OCI-LY7 (cell line): ENCODE measurements at regions of chr1 and their contacts with region 1.

Region 1: DNA sequence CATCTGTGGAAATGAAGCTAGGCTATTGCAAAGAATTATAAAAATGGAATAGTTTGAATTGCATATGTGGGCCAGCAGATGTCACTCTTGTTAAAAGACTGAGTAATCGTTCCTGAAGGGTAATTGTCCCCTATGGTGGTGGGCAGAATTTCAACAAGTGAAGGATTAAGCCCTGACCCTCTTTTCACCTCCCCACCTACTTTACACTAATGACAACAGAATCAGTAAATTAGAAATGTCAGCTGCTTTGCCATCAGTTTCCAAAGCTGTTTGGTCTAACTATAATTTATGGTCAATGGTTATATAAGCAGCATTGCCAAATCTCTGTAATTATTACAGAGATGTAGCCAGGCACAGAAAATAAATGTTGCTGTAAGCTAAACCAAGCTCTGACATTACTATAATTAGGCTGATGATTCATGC is 898.6 kb downstream of the AMY1C start:
- DNase-seq: peak; percentile 53
- H3K4me3 ChIP-seq: no peak overlapping the region
- H3K27ac ChIP-seq: no peak overlapping the region
- H3K4me1 ChIP-seq: no peaks in the 10 kb centered on the region
- CTCF ChIP-seq: peak; percentile 87

Region 2: DNA sequence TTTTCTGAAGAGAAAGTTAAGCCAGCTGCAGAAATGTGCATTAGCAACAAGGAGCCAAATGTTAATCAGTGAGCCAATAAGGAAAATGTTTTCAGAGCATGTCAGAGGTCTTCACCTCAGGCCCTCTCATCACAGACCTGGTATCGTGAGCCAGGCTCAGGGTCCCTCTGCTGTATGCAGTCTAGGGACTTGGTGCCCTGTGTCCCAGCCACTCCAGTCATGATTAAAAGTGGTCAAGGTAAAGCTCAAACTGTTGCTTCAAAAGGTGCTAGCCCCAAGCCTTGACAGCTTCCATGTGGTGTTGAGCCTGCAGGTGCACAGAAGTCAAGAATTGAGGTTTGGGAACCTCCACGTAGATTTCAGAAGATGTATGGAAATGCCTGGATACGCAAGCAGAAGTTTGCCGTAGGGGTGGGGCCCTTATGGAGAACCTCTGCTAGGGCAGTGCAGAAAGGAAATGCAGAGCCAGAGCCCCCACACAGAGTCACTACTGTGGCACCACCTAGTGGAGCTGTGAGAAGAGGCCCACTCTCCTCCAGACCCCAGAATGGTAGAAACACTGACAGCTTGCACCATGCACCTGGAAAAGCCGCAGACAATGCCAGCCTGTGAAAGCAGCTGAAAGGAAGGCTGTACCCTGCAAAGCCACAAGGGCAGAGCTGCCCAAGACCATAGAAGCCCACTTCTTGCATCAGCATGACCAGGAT is 230.1 kb after region 1 on chr1:
- CTCF ChIA-PET with region 1: no interaction called
- POLR2A ChIA-PET with region 1: no interaction called
- intact Hi-C with region 1: loop called (anchors 1 kb)
- DNase-seq: peak; percentile 48
- H3K4me3 ChIP-seq: no peak overlapping the region
- H3K27ac ChIP-seq: no peak overlapping the region
- H3K4me1 ChIP-seq: no peaks in the 10 kb centered on the region
- CTCF ChIP-seq: peak; percentile 54; the same call in 1 of the 2 replicates

Region 3: DNA sequence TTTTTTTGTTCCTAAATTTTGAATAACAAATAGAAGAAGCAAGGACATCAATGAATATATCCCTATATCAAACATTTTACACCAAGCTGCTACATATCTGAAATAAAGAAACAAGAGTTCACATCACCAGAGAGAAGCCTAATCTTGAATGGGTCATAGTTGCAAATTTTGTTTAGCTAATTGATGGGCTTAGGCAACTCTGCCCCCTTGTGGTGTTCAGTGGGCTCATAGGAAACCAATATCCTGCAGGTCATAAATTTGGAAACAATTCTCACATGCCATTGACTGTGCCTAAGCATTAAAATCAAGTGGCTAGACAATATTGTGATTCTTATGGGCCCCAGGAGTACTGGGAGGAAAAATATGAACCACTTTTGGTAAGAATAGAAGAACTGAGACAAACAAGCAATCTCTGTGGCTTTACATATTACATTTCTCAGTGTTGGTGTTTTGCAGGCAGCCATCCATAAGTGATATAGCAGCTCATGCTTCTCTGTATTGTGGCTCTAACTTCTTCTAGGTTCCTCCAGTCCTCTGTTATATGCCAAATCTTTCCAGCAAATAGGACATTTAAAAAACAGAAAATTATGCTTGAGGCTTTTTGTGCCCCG is 1145.4 kb after region 1 on chr1:
- CTCF ChIA-PET with region 1: no interaction called
- POLR2A ChIA-PET with region 1: no interaction called
- intact Hi-C with region 1: loop called (anchors 10 kb)
- DNase-seq: peak; percentile 37
- H3K4me3 ChIP-seq: no peak overlapping the region
- H3K27ac ChIP-seq: no peak overlapping the region
- H3K4me1 ChIP-seq: no peaks in the 10 kb centered on the region
- CTCF ChIP-seq: peak; percentile 87